WTC11 (cell line): ENCODE measurements at regions of chr20 and their contacts with region 1.

Region 1: GRCh38 chr20:38730989-38731737 is 6.9 kb downstream of the SLC32A1 start:
- DNase-seq: peak; percentile 93
- ATAC-seq: peak; percentile 36
- H3K4me3 Mint-ChIP-seq: peak overlapping the region; percentile 74
- H3K27ac Mint-ChIP-seq: 0 out of 2 replicates have a peak overlapping the region, but pooled peaks have one; percentile 19
- H3K4me1 Mint-ChIP-seq: peaks cover 51% of the 10 kb centered on the region
- H3K27me3 Mint-ChIP-seq: peaks cover 99% of the 10 kb centered on the region
- CTCF ChIP-seq: peak; percentile 99

Region 2: GRCh38 chr20:38645980-38646858 is 84.9 kb before region 1 on chr20:
- CTCF ChIA-PET with region 1: interaction called, 188 read pairs
- POLR2A ChIA-PET with region 1: interaction called, 5 read pairs
- DNase-seq: peak; percentile 91
- ATAC-seq: peak; percentile 83
- H3K4me3 Mint-ChIP-seq: peak overlapping the region; percentile 71
- H3K27ac Mint-ChIP-seq: no peak overlapping the region
- H3K4me1 Mint-ChIP-seq: peaks cover 17% of the 10 kb centered on the region
- H3K27me3 Mint-ChIP-seq: peaks cover 6% of the 10 kb centered on the region; the same call in 1 of the 2 replicates
- CTCF ChIP-seq: peak; percentile 91

Region 3: DNA sequence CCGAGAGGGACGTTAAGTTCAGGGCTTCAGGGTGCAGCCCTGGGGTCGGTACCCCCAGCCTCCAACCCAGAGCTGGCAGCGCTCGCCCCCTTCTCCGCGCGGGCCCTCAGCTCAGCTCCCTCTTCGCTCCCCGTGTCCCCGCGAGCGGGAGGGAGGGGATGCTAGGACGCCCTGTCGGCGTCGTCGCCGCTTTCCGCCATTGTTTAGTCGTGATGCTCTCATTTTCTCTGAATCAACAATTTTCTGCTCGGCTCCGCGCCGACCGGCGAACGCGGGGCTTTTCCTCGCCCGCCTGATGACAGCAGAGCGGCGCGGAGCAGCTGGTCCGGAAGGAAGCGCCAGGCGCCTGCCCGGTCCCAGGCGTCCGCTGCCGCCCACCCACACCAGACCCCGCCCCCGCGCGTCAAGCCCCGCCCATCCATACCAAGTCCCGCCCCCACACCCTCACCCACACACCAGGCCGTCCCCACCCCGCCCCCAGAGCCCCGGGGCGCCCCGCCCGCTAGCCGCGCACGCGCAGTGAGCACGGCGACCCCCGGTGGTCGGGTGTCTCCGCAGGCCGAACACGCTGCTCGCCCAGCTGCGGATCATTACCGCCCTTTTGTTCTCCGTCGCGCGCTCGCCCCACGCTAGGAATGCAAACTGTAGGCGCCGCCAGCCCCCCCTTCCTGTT is 56.9 kb before region 1 on chr20:
- CTCF ChIA-PET with region 1: interaction called, 49 read pairs
- POLR2A ChIA-PET with region 1: interaction called, 5 read pairs
- DNase-seq: peak; percentile 83
- ATAC-seq: peak; percentile 88
- H3K4me3 Mint-ChIP-seq: peak overlapping the region; percentile 87
- H3K27ac Mint-ChIP-seq: no peak overlapping the region
- H3K4me1 Mint-ChIP-seq: peaks cover 42% of the 10 kb centered on the region
- H3K27me3 Mint-ChIP-seq: peaks cover 80% of the 10 kb centered on the region
- CTCF ChIP-seq: no peak

Region 4: DNA sequence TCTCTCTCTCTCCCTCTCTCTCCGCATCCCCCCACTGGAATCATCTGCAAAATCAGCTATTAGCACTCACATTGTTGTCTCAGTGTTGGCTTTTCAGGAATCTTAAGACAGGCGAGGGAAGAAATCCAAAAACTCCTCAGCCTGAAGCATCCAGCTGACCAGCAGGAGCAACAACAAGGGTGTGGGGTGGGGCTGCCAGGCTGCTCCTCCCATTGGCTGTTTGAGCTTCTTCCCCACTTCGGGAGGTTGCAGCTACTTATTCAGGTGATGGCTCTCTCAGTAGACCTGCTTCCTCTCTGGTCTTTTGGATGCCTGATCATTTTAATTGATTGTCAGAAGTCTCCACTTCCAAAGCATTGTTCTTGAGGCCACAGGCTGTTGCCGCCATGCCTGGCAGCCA is 31.0 kb before region 1 on chr20:
- CTCF ChIA-PET with region 1: interaction called, 17 read pairs
- POLR2A ChIA-PET with region 1: interaction called, 3 read pairs
- DNase-seq: no peak
- ATAC-seq: peak; percentile 81
- H3K4me3 Mint-ChIP-seq: no peak overlapping the region
- H3K27ac Mint-ChIP-seq: no peak overlapping the region
- H3K4me1 Mint-ChIP-seq: no peaks in the 10 kb centered on the region
- H3K27me3 Mint-ChIP-seq: peaks cover 18% of the 10 kb centered on the region
- CTCF ChIP-seq: no peak

Region 5: DNA sequence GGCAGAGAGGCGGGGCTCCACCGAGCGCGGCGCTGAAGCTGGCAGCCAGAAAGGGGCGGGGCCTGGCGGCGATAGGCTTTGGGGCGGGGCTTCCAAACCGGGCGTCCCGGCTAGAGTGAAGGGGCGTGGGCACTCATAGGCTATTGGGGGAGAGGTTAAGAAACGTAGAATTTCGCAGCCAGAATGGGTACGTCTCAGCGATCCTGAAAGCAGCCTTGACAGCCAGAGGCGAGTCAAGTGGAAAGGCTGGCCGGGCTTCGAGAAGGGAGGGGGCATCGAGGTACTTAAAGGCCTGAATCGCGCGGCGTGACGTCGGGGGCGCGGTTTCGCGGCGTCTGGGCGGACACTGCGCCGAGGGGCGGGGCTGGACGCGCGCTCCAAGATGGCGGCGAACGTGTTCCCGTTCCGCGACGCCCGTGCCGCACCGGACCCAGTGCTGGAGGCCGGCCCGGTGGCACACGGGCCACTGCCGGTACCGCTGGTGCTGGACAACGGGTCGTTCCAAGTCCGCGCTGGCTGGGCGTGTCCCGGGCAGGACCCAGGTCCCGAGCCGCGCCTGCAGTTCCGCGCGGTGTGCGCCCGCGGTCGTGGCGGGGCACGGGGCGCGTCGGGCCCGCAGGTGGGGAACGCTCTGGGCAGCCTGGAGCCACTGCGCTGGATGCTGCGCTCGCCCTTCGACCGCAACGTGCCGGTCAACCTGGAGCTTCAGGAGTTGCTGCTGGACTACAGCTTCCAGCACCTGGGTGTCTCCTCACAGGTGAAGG is 17.1 kb after region 1 on chr20 and contains the start of gene ACTR5:
- CTCF ChIA-PET with region 1: interaction called, 127 read pairs
- POLR2A ChIA-PET with region 1: interaction called, 6 read pairs
- DNase-seq: peak; percentile 97
- ATAC-seq: peak; percentile 94
- H3K4me3 Mint-ChIP-seq: peak within 1 kb of the TSS; percentile 96
- H3K27ac Mint-ChIP-seq: peak within 1 kb of the TSS; percentile 99
- H3K4me1 Mint-ChIP-seq: peaks cover 20% of the 10 kb centered on the region
- H3K27me3 Mint-ChIP-seq: peaks cover 32% of the 10 kb centered on the region
- CTCF ChIP-seq: no peak
- total RNA-seq, gene ACTR5: 9.8 to 12.0 TPM (median 11.5 TPM) in 3 replicates

Region 6: GRCh38 chr20:38893565-38894090 is 162.5 kb after region 1 on chr20:
- CTCF ChIA-PET with region 1: interaction called, 54 read pairs
- POLR2A ChIA-PET with region 1: no interaction called
- DNase-seq: peak; percentile 89
- ATAC-seq: peak; percentile 88
- H3K4me3 Mint-ChIP-seq: peak overlapping the region; percentile 51
- H3K27ac Mint-ChIP-seq: no peak overlapping the region
- H3K4me1 Mint-ChIP-seq: peaks cover 14% of the 10 kb centered on the region
- H3K27me3 Mint-ChIP-seq: peaks cover 3% of the 10 kb centered on the region; the same call in 1 of the 2 replicates
- CTCF ChIP-seq: peak; percentile 94